HepG2 (cell line): ENCODE measurements at regions of chr6 and their contacts with region 1.

Region 1: DNA sequence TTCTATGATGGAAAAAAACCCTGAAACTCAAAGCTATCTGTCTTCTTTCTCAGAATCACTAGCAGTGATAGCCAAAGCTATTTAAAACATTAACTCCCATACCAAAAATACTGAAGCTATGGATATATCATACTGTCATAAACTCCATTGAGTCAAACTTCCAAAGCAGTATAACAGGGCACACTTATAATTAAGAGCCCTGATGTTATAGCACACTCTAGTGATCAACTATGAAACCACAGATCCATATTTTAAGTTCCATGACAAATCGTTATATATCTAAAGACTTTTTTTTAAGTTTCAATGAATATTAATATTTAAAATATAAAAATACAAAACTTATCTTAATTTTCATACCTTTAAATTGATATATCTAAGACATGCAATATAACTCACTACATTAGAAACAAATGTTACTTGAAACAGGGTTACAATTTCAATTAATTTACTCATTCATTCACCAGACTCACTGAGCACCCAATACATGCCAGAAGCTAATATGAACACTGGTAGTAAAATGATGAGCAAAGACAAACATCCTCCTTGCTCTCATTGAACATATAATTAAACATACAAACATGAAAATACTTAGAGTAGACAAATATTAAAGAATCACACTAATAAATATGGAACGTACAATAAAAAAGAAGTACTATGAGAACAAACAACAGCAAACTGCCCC is 69.3 kb downstream of the IBTK start:
- DNase-seq: peak; percentile 5
- ATAC-seq: peak; percentile 43; the same call in 1 of the 3 replicates
- H3K4me3 ChIP-seq: no peak overlapping the region
- H3K27ac ChIP-seq: no peak overlapping the region
- H3K4me1 ChIP-seq: no peaks in the 10 kb centered on the region
- H3K27me3 ChIP-seq: no peaks in the 10 kb centered on the region
- CTCF ChIP-seq: peak; percentile 45; the same call in 1 of the 2 replicates
- EP300 ChIP-seq: no peak
- POLR2A ChIP-seq: no peak
- RAD21 ChIP-seq: no peak

Region 2: DNA sequence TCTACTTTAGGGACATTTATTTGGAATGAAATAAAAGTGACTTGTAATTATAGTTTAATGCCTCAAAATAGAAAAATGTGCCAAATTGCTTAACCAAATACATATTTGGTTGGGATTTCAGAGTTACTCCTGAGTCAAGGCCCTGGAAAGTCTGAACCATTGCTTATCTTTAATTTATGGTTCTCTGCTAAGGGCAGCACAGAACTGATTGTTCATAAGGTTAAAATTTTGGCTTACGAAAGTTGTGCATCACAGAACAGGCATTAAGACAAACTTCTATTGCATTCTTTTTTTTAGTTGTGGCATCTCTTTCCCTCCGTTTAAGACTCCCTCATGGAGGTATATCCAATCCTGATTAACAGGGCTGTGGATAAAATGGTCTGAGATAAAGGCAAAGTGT is 333.5 kb before region 1 on chr6:
- CTCF ChIA-PET with region 1: no interaction called
- POLR2A ChIA-PET with region 1: no interaction called
- in situ Hi-C with region 1: no loop called
- intact Hi-C with region 1: loop called (anchors 10 kb)
- DNase-seq: no peak
- ATAC-seq: no peak
- H3K4me3 ChIP-seq: no peak overlapping the region
- H3K27ac ChIP-seq: no peak overlapping the region
- H3K4me1 ChIP-seq: peaks cover 46% of the 10 kb centered on the region
- H3K27me3 ChIP-seq: no peaks in the 10 kb centered on the region
- CTCF ChIP-seq: no peak
- EP300 ChIP-seq: no peak
- POLR2A ChIP-seq: no peak
- RAD21 ChIP-seq: no peak

Region 3: DNA sequence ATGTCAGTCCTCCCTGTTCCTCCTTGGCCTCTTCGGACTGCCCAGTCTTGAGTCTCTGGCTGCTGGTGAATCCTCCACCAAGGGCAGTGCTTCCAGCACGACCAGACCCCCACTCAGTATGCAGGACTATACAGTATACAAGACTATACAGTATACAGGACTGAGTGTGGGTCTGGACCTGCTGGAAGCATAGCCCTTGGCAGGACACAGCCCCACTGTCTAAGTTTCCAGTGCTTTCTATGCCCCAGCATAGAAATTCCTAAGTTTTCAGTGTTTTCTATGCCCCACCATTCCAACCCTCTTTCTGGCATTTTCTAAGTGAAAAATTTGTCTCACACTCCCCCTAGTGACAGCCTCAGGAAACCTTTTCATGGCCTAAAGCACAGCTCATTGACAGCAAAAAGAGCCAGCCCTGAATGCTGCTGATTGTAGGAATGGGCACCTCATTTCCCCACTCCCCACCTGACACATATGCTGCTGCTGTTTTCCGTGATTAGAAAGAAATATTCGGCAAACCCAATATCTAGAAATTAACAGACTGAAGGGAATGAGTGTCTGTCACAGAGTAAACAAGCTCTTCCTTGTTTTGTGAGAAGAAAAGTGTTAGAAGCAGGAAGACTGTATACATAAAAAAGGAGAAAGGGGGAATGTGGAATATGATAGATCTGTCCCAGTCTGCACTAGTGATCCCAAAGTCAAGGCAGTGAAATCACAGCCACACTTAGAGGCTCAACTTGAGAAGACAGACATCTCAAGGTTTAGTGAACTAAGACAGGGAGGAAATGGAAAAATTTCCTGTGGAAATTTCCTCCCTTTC is 137.6 kb before region 1 on chr6:
- CTCF ChIA-PET with region 1: no interaction called
- POLR2A ChIA-PET with region 1: no interaction called
- in situ Hi-C with region 1: no loop called
- intact Hi-C with region 1: loop called (anchors 10 kb)
- DNase-seq: peak; percentile 46
- ATAC-seq: peak; percentile 97
- H3K4me3 ChIP-seq: no peak overlapping the region
- H3K27ac ChIP-seq: no peak overlapping the region
- H3K4me1 ChIP-seq: peaks cover 14% of the 10 kb centered on the region
- H3K27me3 ChIP-seq: no peaks in the 10 kb centered on the region
- CTCF ChIP-seq: peak; percentile 80
- EP300 ChIP-seq: no peak
- POLR2A ChIP-seq: no peak
- RAD21 ChIP-seq: peak; percentile 55

Region 4: GRCh38 chr6:82080767-82081166 is 97.5 kb before region 1 on chr6:
- CTCF ChIA-PET with region 1: no interaction called
- POLR2A ChIA-PET with region 1: no interaction called
- in situ Hi-C with region 1: no loop called
- intact Hi-C with region 1: loop called (anchors 5 kb)
- DNase-seq: no peak
- ATAC-seq: no peak
- H3K4me3 ChIP-seq: no peak overlapping the region
- H3K27ac ChIP-seq: no peak overlapping the region
- H3K4me1 ChIP-seq: peaks cover 61% of the 10 kb centered on the region
- H3K27me3 ChIP-seq: no peaks in the 10 kb centered on the region
- CTCF ChIP-seq: no peak
- EP300 ChIP-seq: no peak
- POLR2A ChIP-seq: no peak
- RAD21 ChIP-seq: no peak

Region 5: GRCh38 chr6:82166493-82166892 is 11.7 kb before region 1 on chr6:
- CTCF ChIA-PET with region 1: no interaction called
- POLR2A ChIA-PET with region 1: no interaction called
- in situ Hi-C with region 1: no loop called
- intact Hi-C with region 1: loop called (anchors 1 kb)
- DNase-seq: no peak
- ATAC-seq: peak; percentile 24; the same call in 1 of the 3 replicates
- H3K4me3 ChIP-seq: no peak overlapping the region
- H3K27ac ChIP-seq: no peak overlapping the region
- H3K4me1 ChIP-seq: no peaks in the 10 kb centered on the region
- H3K27me3 ChIP-seq: no peaks in the 10 kb centered on the region
- CTCF ChIP-seq: no peak
- EP300 ChIP-seq: no peak
- POLR2A ChIP-seq: no peak
- RAD21 ChIP-seq: no peak